ENCODE measurements at regions of chr17 and their contacts with region 1.

Region 1: DNA sequence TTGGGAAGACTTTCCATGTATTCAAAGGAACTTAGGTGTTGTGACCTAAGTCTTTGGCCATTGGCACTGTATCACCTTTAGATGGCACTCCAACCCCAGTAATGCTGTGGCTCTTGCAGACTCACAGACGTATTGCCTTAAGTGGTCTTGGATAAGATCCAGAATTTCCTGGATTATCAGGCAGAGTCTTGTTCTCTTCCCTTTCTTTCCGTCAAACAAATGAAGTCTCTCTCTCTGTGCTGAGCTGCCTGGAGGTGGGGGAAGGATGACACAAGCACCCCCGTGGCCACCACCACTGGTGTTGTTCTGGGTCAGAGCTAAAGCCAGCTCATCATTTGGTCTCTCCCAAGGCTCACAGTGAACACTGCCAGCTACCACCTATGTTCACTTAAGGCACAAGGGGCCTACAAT is 789.9 kb upstream of the KIF2B start:
- DNase-seq: no peak
- H3K4me3 ChIP-seq: no peak overlapping the region
- H3K27ac ChIP-seq: no peak overlapping the region
- H3K4me1 ChIP-seq: no peaks in the 10 kb centered on the region
- H3K27me3 ChIP-seq: no peaks in the 10 kb centered on the region
- CTCF ChIP-seq: peak; percentile 26 to 51 (median 42)
- EP300 ChIP-seq: no peak
- POLR2A ChIP-seq: no peak

Region 2: GRCh38 chr17:54891176-54891821 is 1858.4 kb after region 1 on chr17:
- intact Hi-C with region 1: loop called (anchors 5 kb)
- DNase-seq: no peak
- H3K4me3 ChIP-seq: no peak overlapping the region
- H3K27ac ChIP-seq: no peak overlapping the region
- H3K4me1 ChIP-seq: peaks cover 0 to 3% (median 0%) of the 10 kb centered on the region in 4 donors
- H3K27me3 ChIP-seq: no peaks in the 10 kb centered on the region
- CTCF ChIP-seq: no peak
- EP300 ChIP-seq: no peak
- POLR2A ChIP-seq: no peak

Measured in sigmoid colon (tissue), 7 donors.